Body of pancreas (tissue), 4 donors: ENCODE measurements at regions of chr16 and their contacts with region 1.

Region 1: DNA sequence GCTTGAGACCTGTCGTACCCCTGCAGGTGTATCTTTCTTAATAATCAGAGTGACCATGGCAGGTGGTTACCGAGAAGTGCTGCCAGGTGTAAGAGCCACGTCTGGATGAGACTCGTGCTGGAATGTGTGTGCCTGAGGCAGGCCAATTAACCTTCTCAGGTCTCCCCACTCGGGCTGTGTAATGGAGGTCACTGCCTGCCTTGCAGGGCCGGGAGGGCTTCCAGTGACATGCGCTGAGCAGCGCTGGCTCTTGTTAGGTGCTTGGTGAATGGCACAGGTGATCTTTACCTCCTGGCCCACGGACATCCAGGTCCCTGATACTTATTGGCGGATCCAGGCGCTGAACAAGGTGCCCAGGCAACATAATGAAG is 4.6 kb upstream of the GSE1 start:
- DNase-seq: peak in 3 of 4 donors; percentile 37 to 54 (median 44)
- ATAC-seq: no peak
- H3K4me3 ChIP-seq: no peak overlapping the region
- H3K27ac ChIP-seq: peak overlapping the region in 1 of 4 donors; percentile 6
- H3K4me1 ChIP-seq: peaks cover 72% of the 10 kb centered on the region
- H3K27me3 ChIP-seq: no peaks in the 10 kb centered on the region
- CTCF ChIP-seq: no peak
- POLR2A ChIP-seq: no peak

Region 2: GRCh38 chr16:85420501-85421337 is 187.8 kb before region 1 on chr16:
- intact Hi-C with region 1: loop called (anchors 2 kb)
- DNase-seq: peak; percentile 59 to 76 (median 68)
- ATAC-seq: peak; percentile 40
- H3K4me3 ChIP-seq: no peak overlapping the region
- H3K27ac ChIP-seq: no peak overlapping the region
- H3K4me1 ChIP-seq: peaks cover 53% of the 10 kb centered on the region
- H3K27me3 ChIP-seq: no peaks in the 10 kb centered on the region
- CTCF ChIP-seq: peak; percentile 92 to 100 (median 100)
- POLR2A ChIP-seq: no peak

Region 3: DNA sequence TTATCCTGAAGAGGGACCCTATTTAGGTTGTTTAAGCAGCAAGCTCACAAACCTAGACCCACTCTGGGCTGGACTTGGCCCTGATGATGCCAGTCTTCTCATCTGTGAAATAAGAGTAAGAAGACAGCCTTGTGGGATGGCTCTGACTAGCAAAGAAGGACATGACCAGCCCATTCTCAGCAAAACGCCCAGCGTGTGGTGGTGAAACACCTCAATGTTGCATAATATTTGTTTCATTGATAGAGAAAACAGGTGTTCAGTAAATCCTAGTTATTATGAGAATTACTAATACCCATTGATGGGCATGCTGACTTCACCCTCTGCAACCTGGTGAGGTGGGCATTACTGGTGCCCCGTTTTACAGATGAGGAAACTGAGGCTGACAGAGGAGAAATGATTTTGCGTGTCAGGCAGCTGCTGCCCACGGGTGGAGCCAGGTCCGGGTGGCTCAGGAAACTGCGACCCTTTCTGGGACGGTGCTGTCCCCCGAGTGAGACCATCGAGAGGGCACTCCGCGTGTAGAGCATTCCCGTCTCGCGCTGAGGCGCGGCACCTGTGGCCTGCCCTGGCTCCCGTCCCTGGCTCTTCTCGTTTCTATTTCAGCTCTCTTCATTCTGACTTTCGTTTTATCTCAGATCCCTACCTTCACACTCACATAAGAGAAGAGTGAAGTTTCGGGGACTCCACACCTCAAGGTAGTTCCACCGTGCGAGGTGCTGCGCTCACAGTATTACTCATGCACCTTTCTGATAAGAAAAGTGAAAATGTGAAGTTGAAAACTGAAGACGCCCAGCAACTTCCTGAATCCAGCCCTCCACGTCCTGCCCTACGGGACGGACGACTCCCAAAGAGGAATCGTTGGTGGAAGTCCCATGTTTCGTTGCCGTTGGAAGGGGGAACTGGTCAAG is 339.0 kb after region 1 on chr16:
- intact Hi-C with region 1: no loop called
- DNase-seq: no peak
- ATAC-seq: no peak
- H3K4me3 ChIP-seq: no peak overlapping the region
- H3K27ac ChIP-seq: no peak overlapping the region
- H3K4me1 ChIP-seq: no peaks in the 10 kb centered on the region
- H3K27me3 ChIP-seq: no peaks in the 10 kb centered on the region
- CTCF ChIP-seq: no peak
- POLR2A ChIP-seq: no peak

Region 4: DNA sequence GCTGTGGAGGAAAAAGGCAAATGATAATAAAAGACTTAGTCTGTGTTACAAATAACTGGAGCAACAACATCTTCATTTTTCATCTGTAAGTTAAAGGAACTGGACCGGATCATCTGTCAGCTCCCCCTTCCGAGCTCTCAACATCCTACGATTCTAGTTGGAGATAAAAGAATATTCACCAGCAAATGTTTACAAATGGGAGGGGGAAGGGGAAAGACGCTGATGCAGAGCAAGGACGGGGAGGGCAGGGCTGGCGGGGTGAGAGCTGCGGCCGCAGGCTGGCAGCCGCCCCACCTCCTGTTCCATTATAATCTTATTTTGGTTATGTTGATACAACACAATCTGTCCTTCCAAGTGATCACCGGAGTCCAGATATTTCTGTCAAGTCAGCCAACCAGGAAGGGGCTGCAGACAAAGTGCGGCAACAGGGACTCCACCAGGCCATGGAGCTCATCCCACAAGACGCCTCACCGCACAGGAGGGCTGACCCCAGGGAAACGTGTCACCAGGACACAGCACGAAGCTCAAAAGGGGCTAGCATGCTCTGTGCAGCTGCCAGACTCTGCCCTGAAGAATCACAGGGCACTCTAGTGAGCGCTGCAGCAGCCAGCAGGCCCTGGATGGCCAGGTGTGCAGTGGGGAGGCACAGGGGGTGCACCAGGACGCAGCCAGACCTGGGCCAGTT is 1755.4 kb after region 1 on chr16:
- intact Hi-C with region 1: no loop called
- DNase-seq: peak; percentile 31 to 60 (median 39)
- ATAC-seq: peak; percentile 63
- H3K4me3 ChIP-seq: no peak overlapping the region
- H3K27ac ChIP-seq: peak overlapping the region in 2 of 4 donors; percentile 19 to 62
- H3K4me1 ChIP-seq: peaks cover 15% of the 10 kb centered on the region
- H3K27me3 ChIP-seq: no peaks in the 10 kb centered on the region
- CTCF ChIP-seq: no peak
- POLR2A ChIP-seq: no peak